ENCODE measurements at regions of chr6 and their contacts with region 1.

Region 1: DNA sequence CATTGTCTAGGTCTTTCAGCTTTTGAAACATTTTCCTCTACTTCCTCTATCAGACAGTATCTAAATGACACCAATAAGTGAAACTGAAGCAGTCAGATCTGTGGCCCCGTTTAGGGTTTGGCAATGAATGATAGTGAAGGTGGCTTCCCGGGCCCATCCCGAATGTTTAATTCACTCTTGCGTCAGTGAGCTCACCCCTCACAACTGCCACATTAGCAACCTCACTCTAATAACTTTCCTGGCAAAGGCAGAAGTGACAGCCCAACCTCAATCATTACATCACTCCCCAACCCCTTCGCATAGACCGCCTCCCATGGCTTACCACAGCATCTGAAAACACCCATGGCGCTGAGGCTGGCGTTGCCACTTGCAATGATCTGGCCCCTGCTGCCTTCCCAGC is 92.4 kb upstream of the CD83 start:
- DNase-seq: no peak
- H3K4me3 ChIP-seq: no peak overlapping the region
- CTCF ChIP-seq: no peak

Region 2: GRCh38 chr6:14037402-14038277 is 12.5 kb after region 1 on chr6:
- CTCF ChIA-PET with region 1: interaction called, 13 read pairs
- POLR2A ChIA-PET with region 1: no interaction called
- DNase-seq: no peak
- H3K4me3 ChIP-seq: no peak overlapping the region
- CTCF ChIP-seq: no peak

Region 3: GRCh38 chr6:15023448-15023847 is 998.3 kb after region 1 on chr6:
- CTCF ChIA-PET with region 1: no interaction called
- POLR2A ChIA-PET with region 1: no interaction called
- DNase-seq: no peak
- H3K4me3 ChIP-seq: no peak overlapping the region
- CTCF ChIP-seq: no peak

Measured in AG04449 (cell line).